Prostate gland (tissue), 2 donors: ENCODE measurements at regions of chr19 and their contacts with region 1.

Region 1: DNA sequence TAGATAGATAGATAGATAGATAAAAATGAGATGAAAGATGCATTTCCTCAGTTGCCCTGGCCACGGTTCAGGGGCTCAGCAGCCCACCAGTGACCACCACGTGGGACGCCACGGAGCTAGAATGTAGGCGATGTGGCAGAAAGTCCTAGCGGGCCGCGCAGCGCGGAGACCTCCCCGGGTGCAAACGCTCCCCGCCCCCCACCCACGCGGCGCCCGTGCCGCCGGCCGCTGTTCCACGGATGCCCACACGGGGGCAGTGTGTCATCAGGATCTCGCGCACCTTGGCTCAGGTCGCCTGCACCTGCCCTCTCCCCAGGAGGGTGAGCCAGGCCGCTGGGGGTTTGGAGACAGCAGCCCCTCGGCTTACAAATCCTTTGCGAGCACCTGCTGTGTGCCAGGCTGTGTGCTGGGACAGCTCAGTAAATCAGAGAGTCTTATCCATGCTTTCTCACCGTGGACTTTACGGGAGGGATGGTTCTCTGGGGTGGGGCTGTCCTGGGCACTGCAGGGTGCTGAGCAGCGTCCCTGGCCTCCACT is 13.7 kb upstream of the TLE5 start:
- DNase-seq: no peak
- H3K4me3 ChIP-seq: no peak overlapping the region
- H3K27ac ChIP-seq: no peak overlapping the region
- H3K4me1 ChIP-seq: no peaks in the 10 kb centered on the region
- H3K27me3 ChIP-seq: no peaks in the 10 kb centered on the region
- CTCF ChIP-seq: peak; percentile 80 to 96 (median 90)
- POLR2A ChIP-seq: no peak

Region 2: DNA sequence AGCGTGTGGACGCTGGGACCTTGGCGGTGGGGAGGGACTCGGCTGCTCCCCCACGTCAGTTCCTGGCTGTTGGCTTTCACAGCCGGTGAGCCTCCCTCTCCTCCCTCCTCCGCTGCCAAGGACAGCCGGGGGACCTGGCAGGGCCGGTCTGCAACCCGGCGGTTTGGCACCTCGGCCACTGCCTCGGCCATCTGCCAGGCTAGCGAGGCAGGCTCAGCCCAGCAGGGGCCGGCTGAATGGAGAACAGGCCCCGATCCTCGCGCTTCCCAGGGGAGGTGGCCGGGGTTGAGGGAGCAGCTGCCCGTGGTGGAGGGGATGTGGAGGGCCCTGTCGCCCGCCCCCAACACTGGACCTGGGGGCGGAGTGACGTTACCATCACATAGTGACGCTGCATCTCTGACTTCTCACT is 18.7 kb before region 1 on chr19:
- intact Hi-C with region 1: no loop called
- DNase-seq: peak; percentile 93
- H3K4me3 ChIP-seq: no peak overlapping the region
- H3K27ac ChIP-seq: peak overlapping the region; percentile 86 to 90
- H3K4me1 ChIP-seq: peaks cover 35% of the 10 kb centered on the region
- H3K27me3 ChIP-seq: no peaks in the 10 kb centered on the region
- CTCF ChIP-seq: peak in 2 of 4 experiments; percentile 41 to 55
- POLR2A ChIP-seq: peak; percentile 41

Region 3: GRCh38 chr19:3108775-3109174 is 32.8 kb after region 1 on chr19:
- intact Hi-C with region 1: loop called (anchors 2 kb)
- DNase-seq: peak; percentile 42
- H3K4me3 ChIP-seq: no peak overlapping the region
- H3K27ac ChIP-seq: no peak overlapping the region
- H3K4me1 ChIP-seq: no peaks in the 10 kb centered on the region
- H3K27me3 ChIP-seq: no peaks in the 10 kb centered on the region
- CTCF ChIP-seq: peak; percentile 45 to 76 (median 65)
- POLR2A ChIP-seq: no peak

Region 4: GRCh38 chr19:3163230-3163886 is 87.4 kb after region 1 on chr19:
- intact Hi-C with region 1: loop called (anchors 5 kb)
- DNase-seq: peak; percentile 33
- H3K4me3 ChIP-seq: no peak overlapping the region
- H3K27ac ChIP-seq: no peak overlapping the region
- H3K4me1 ChIP-seq: no peaks in the 10 kb centered on the region
- H3K27me3 ChIP-seq: no peaks in the 10 kb centered on the region
- CTCF ChIP-seq: peak; percentile 81 to 91 (median 89)
- POLR2A ChIP-seq: no peak